Activated CD4-positive, alpha-beta memory T cell treated with anti-CD3 and anti-CD28 coated beads for 36 hours (primary cell): ENCODE measurements at regions of chr11 and their contacts with region 1.

Region 1: DNA sequence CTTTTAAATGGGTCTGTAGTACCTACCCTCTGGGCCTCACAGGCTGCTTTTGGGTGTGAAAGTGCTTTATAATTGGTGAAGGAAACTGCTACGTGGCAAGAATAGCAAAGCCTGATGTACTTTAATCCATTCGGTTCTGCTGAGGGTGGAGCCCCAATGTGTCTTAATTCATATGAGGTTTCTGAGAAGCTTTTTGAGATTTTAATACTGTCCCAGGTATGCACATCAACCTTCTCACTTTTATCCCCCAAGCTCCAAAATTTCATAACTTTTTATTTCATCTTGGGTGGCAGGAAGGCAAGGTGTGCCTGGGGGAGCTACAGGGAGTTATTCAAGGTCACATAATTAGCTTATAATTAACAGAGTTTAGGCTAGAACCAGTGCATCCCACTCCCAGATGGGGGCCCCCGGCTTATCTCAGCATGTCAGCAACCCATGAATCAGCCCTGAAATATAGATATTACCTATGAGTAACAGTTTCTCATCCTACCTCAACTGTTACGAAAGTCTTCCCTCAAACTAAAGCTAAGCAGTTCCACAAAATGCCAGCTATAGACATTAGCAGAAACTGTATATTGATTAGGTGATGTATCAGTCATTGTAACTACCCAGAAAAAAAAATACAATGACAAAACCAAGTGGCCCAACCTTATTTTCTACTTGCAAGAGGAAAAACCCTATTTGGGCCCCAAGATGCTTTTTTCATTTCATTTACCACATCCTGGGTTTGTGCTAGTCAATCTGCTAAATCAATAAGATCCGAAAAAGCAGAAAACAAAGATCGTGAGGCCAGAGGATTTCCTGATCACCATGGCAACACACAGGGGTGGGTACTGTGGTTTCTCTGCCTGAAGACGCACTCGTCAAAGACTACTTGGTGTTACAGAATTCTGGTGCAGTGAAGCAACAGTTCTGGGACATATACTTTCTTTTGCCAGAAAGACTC is 26.7 kb downstream of the CD44 start:
- DNase-seq: peak; percentile 95
- H3K4me3 Mint-ChIP-seq: peak overlapping the region; percentile 71
- H3K27ac Mint-ChIP-seq: peak overlapping the region; percentile 99
- H3K4me1 Mint-ChIP-seq: peaks cover 99% of the 10 kb centered on the region
- H3K27me3 Mint-ChIP-seq: no peaks in the 10 kb centered on the region

Region 2: GRCh38 chr11:34721646-34722045 is 444.1 kb before region 1 on chr11:
- CTCF ChIA-PET with region 1: no interaction called
- POLR2A ChIA-PET with region 1: no interaction called
- intact Hi-C with region 1: no loop called
- DNase-seq: no peak
- H3K4me3 Mint-ChIP-seq: no peak overlapping the region
- H3K27ac Mint-ChIP-seq: no peak overlapping the region
- H3K4me1 Mint-ChIP-seq: no peaks in the 10 kb centered on the region
- H3K27me3 Mint-ChIP-seq: peaks cover 3% of the 10 kb centered on the region

Region 3: DNA sequence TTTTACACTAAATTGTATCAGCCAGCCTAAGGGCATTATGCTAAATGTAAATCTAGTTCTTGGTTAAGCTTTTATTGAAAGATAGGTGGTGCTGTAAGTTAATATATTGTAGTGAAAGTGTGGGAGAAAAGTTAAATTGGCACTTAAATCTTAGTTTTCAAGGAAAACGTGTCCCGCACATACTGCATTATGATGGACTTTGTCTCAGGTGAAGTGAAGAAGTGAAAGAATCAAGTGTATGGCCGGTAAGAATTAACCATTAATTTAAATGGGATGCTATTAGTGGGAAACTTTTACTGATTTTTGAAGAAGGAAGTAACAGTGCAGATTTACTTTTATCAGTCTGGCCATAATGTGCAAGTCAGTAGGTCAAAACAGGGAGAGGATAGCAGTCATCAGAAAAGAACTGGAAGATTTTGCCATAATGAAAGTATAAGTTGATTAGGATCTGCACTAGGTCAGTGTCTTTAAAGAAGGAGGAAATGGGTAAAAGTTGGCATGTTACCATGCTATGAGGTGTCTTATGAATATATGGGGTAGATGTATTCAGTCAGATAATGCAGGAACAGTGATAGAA is 167.7 kb before region 1 on chr11:
- CTCF ChIA-PET with region 1: interaction called, 7 read pairs
- POLR2A ChIA-PET with region 1: no interaction called
- intact Hi-C with region 1: loop called (anchors 1 kb)
- DNase-seq: no peak
- H3K4me3 Mint-ChIP-seq: peak overlapping the region; percentile 7
- H3K27ac Mint-ChIP-seq: peak overlapping the region; percentile 25
- H3K4me1 Mint-ChIP-seq: peaks cover 19% of the 10 kb centered on the region
- H3K27me3 Mint-ChIP-seq: no peaks in the 10 kb centered on the region

Region 4: GRCh38 chr11:35040221-35040942 is 125.3 kb before region 1 on chr11:
- CTCF ChIA-PET with region 1: interaction called, 4 read pairs
- POLR2A ChIA-PET with region 1: interaction called, 16 read pairs
- intact Hi-C with region 1: loop called (anchors 1 kb)
- DNase-seq: peak; percentile 79
- H3K4me3 Mint-ChIP-seq: peak overlapping the region; percentile 79
- H3K27ac Mint-ChIP-seq: peak overlapping the region; percentile 94
- H3K4me1 Mint-ChIP-seq: peaks cover 74% of the 10 kb centered on the region
- H3K27me3 Mint-ChIP-seq: peaks cover 1% of the 10 kb centered on the region

Region 5: GRCh38 chr11:35151241-35151640 is 14.5 kb before region 1 on chr11:
- CTCF ChIA-PET with region 1: interaction called, 113 read pairs
- POLR2A ChIA-PET with region 1: interaction called, 65 read pairs
- intact Hi-C with region 1: loop called (anchors 1 kb)
- DNase-seq: no peak
- H3K4me3 Mint-ChIP-seq: no peak overlapping the region
- H3K27ac Mint-ChIP-seq: peak overlapping the region; percentile 99
- H3K4me1 Mint-ChIP-seq: peaks cover 96% of the 10 kb centered on the region
- H3K27me3 Mint-ChIP-seq: no peaks in the 10 kb centered on the region

Region 6: DNA sequence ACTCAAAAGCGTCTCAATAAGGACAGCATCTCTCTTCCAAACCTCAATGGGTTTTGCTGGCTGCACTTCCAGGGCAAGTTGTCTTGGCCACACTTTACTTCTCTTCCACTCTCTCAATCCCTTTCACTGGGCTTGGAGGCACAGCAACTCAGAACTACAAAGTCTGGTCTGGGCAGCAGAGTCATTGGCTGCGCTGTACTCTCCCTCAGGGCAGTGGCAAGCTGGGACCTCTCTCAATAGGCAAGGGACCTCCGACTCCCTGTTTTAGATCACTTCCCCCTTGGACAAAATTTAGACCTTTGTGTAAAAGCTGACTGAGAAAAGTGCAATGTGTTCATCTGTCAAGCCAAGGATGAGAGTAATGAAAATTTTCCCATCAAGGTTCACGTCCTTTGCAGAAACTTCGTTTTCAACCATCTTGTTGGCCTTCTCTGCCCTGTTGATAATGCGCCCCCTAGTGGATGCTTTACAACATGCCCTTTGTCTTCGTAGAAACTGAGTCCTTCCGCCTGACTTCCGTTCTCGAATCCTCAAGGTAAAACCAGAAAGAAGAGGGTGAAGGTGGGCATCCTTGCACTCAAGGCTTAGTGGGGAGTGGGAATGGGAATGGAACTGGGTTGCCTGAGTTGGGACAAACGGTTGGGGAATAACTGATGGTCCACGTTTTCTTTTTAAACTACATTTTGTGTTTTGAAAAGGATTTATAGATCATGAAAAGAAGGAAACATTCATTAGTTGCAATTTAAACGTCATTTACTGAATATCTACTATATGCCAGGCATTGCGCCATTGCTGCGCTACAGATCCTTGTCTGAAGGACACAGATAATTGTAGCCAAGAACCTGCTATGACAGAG is 72.4 kb after region 1 on chr11:
- CTCF ChIA-PET with region 1: interaction called, 5 read pairs
- POLR2A ChIA-PET with region 1: interaction called, 3 read pairs
- intact Hi-C with region 1: loop called (anchors 1 kb)
- DNase-seq: peak; percentile 68
- H3K4me3 Mint-ChIP-seq: no peak overlapping the region
- H3K27ac Mint-ChIP-seq: no peak overlapping the region
- H3K4me1 Mint-ChIP-seq: peaks cover 72% of the 10 kb centered on the region
- H3K27me3 Mint-ChIP-seq: no peaks in the 10 kb centered on the region

Region 7: GRCh38 chr11:35391922-35392813 is 226.5 kb after region 1 on chr11:
- CTCF ChIA-PET with region 1: interaction called, 11 read pairs
- POLR2A ChIA-PET with region 1: no interaction called
- intact Hi-C with region 1: loop called (anchors 1 kb)
- DNase-seq: peak; percentile 89
- H3K4me3 Mint-ChIP-seq: no peak overlapping the region
- H3K27ac Mint-ChIP-seq: no peak overlapping the region
- H3K4me1 Mint-ChIP-seq: peaks cover 29% of the 10 kb centered on the region
- H3K27me3 Mint-ChIP-seq: peaks cover 4% of the 10 kb centered on the region